ENCODE measurements at regions of chr15 and their contacts with region 1.

Region 1: DNA sequence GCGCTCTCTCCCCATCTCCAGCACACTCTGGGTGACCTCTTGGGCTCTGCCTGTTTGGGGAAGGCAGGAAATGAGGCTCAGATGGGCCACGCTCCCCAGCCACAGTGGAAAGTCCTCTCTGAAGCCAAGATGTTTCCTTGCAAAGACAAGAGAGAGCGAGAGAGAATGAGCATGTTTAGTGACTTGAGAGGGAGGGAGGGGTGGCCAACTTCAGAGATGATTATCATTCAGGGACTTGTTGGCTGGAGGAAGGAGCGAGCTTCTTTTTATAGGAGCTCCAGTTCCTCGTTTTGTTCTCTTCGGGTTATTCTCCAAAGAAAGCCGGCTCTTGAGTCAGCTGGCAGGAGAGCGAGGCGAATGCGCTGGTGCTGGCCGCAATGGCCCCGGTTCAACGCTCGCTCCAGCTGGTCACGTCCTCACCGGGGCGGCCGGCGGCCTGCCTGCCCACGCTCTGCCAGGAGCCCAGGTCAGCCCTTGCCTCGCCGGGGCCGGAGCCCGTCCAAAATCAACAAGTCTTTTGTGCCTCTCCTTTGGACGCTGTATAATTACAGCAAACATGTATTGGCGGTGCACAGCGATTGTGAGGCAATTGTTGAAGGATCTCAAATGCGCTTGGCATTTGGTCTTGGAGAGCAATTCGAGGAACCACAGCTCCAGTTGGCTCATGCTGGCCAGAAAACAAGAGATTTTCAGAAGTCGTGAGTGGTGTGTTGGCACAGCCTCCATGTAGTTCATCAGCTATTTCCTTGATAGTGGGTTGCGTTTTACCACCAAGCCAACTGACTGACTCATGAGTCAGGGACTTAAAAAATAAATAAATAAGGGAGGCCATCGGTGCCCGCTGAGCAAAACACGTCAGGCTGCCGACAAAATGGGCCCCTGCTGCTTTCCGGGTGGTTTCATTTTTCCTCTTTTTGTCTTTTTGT is 288.6 kb downstream of the UACA start:
- DNase-seq: peak; percentile 98
- H3K4me3 ChIP-seq: peak overlapping the region in 2 of 3 experiments; percentile 2 to 29
- H3K27ac ChIP-seq: peak overlapping the region; percentile 58
- H3K4me1 ChIP-seq: peaks cover 31% of the 10 kb centered on the region
- H3K27me3 ChIP-seq: peaks cover 7% of the 10 kb centered on the region
- CTCF ChIP-seq: no peak

Region 2: DNA sequence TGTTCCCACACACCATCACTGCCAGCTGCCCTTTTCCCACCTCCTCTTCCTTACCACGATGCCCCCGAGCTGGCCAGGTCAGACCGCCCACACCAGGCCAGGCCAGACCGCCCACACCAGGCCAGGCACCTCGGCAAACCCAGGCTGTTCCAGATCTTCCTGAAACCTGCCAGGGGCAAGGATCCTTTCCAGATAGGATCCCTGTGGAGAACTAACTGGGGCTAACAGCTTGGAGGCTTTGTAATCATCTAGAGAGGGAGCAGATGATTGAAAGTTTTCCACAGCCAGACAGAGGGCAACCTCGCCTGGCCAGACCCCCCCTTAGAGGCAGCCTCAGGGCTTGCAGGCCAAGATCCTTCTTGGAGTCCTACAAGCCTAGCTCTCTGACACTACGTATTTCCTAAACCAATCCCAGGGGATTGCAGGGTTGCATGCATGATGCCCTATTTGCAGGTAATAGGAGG is 89.6 kb before region 1 on chr15:
- CTCF ChIA-PET with region 1: no interaction called
- dilution Hi-C with region 1: no loop called
- in situ Hi-C with region 1: no loop called
- intact Hi-C with region 1: loop called (anchors 5 kb)
- DNase-seq: no peak
- H3K4me3 ChIP-seq: no peak overlapping the region
- H3K27ac ChIP-seq: no peak overlapping the region
- H3K4me1 ChIP-seq: no peaks in the 10 kb centered on the region
- H3K27me3 ChIP-seq: no peaks in the 10 kb centered on the region
- CTCF ChIP-seq: no peak

Region 3: GRCh38 chr15:70415398-70415797 is 59.3 kb before region 1 on chr15:
- CTCF ChIA-PET with region 1: no interaction called
- dilution Hi-C with region 1: no loop called
- in situ Hi-C with region 1: no loop called
- intact Hi-C with region 1: loop called (anchors 10 kb)
- DNase-seq: no peak
- H3K4me3 ChIP-seq: no peak overlapping the region
- H3K27ac ChIP-seq: no peak overlapping the region
- H3K4me1 ChIP-seq: no peaks in the 10 kb centered on the region
- H3K27me3 ChIP-seq: peaks cover 21% of the 10 kb centered on the region
- CTCF ChIP-seq: no peak

Region 4: DNA sequence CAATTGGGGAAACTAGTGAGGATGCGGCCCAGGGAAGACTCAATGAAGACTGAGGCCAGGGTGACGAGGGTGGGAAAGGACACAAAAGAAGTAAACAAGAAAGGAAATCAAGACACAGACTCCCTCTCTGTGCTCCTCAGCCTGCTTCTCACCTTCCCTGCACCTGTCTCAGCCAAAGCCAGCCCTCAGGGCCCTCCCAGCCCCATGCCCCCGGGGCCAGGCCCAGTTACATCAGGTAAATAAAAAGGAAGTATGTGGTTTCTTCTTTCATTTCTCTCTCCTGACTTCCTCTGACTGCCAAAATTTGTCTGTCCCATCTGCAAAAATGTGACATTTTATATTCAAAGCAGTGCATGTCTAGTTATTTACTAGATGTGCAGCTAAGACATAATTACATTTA is 39.4 kb before region 1 on chr15:
- CTCF ChIA-PET with region 1: no interaction called
- dilution Hi-C with region 1: no loop called
- in situ Hi-C with region 1: no loop called
- intact Hi-C with region 1: loop called (anchors 1 kb)
- DNase-seq: no peak
- H3K4me3 ChIP-seq: no peak overlapping the region
- H3K27ac ChIP-seq: no peak overlapping the region
- H3K4me1 ChIP-seq: peaks cover 10% of the 10 kb centered on the region
- H3K27me3 ChIP-seq: no peaks in the 10 kb centered on the region
- CTCF ChIP-seq: no peak

Region 5: DNA sequence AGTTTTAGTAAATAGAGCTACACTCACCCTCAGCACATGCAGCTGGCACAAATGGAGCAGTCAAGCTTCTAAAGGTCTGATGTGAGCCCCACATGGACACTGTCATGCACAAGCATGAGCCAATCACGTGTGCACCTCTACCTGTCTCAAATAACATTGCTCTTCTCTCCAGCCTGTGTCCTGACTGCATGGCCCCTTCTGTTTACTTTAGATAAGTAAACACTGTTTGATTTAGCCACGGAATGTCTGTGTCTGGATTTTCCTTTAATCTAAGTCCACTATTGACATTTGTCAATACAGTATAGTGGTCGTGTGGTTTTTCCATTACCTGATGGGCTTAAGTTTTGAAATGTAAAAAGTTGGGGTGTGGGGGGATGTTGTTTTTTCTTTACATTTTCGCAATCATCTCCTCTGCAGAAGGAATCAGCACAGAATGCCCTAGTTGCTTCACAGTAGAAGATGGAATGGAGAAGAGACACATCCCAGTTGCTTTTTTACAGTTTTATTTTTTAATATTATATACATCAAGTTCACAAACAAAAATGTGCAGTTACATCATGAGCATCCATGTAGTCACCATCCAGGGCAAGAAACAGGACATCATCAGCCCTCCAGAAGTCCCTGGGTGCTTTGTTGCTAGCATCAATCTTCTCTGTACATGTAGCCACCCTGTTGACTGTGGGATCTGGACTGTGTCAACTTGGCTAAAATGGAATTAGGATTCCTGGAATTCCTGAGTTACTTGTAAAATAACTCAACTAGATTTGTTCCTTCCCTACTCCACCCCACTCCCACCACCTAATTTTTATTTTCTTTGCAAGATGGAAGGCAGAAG is 142.6 kb after region 1 on chr15:
- CTCF ChIA-PET with region 1: no interaction called
- dilution Hi-C with region 1: no loop called
- in situ Hi-C with region 1: no loop called
- intact Hi-C with region 1: no loop called
- DNase-seq: no peak
- H3K4me3 ChIP-seq: no peak overlapping the region
- H3K27ac ChIP-seq: no peak overlapping the region
- H3K4me1 ChIP-seq: no peaks in the 10 kb centered on the region
- H3K27me3 ChIP-seq: no peaks in the 10 kb centered on the region
- CTCF ChIP-seq: no peak

Measured in mammary epithelial cell (primary cell).